ENCODE measurements at regions of chr9 and their contacts with region 1.

Region 1: DNA sequence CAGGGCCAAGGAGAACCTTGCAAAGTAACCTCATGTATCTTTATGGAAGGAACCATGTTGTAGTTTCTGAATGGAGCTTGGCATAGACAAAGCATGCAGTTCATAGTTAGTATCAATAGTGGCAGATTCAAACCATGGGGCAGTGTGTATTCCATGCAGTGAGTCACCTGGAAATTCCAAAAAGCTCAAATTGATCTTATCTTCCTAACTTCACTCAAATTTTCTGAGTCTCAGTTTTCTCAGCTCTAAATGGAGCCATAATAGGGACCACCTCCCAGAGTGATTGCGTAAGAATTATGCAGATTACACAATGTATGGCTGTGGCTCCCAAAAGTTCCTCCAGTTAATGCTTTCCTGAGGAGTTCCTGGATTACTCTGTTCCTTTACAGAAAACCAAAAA is 549.9 kb upstream of the KLF4 start:
- DNase-seq: no peak
- ATAC-seq: no peak
- H3K4me3 ChIP-seq: no peak overlapping the region
- H3K27ac ChIP-seq: no peak overlapping the region
- H3K4me1 ChIP-seq: no peaks in the 10 kb centered on the region
- H3K27me3 ChIP-seq: no peaks in the 10 kb centered on the region
- CTCF ChIP-seq: no peak

Region 2: DNA sequence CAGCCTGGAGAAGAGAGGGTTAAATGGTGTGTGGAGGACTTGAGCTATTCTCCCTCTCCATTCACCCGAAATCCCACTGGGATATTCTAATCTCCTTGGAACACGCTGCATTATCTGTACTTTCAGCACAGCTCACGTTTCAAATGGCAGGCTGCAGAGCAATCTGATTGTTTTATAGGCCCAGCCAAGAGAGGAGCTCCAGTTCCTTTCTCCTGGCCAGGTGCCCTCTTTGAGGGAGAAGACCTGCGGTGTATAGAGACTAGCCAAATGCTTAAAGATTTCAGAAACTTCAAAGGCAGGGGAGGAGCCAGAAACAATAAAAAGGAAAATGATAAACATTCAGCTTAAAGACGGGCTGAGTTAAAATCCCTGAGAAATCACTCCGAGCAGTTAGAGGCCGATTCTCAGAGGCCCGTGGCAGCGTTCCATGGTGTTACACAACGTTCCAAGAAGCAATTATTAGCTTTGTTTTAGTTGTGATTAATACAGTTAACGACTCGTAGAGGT is 14.1 kb after region 1 on chr9:
- intact Hi-C with region 1: loop called in 1 of 2 experiments (anchors 2 kb)
- DNase-seq: peak; percentile 72 to 78
- ATAC-seq: peak; percentile 59 to 83 (median 66)
- H3K4me3 ChIP-seq: peak overlapping the region; percentile 43
- H3K27ac ChIP-seq: peak overlapping the region; percentile 48
- H3K4me1 ChIP-seq: peaks cover 42% of the 10 kb centered on the region
- H3K27me3 ChIP-seq: no peaks in the 10 kb centered on the region
- CTCF ChIP-seq: no peak

Region 3: DNA sequence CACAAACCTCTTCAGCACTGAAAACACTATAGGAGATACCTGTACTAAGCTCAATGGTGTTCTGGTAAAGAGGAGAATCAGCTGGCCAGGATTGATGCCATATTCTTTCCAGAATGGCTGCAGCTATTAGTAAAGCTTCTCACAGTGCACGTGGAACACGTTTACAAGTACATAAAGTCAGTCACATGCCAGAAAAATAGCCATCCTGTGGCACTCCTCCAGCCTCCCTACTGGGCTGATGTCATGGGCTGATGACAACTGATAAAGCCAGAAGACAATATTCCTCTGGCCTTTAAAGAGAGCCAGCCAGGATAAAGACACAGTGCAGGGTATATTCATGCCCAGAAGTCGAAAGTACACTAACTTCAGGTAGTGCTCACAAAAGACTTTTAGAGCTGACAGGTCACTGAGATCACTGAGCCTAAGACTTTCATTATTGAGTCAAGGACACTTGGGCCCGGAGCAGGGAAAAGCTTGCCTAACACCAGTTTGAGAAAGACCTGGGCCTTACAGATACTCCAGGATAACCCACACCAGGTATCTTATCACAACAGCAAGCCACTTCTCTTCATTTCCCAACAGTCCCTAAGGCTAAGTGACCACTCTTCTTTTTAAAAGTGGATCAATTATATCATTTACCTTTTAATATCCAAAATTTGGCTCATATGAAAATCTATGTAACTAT is 924.1 kb after region 1 on chr9:
- intact Hi-C with region 1: no loop called
- DNase-seq: no peak
- ATAC-seq: no peak
- H3K4me3 ChIP-seq: no peak overlapping the region
- H3K27ac ChIP-seq: no peak overlapping the region
- H3K4me1 ChIP-seq: no peaks in the 10 kb centered on the region
- H3K27me3 ChIP-seq: no peaks in the 10 kb centered on the region
- CTCF ChIP-seq: no peak

Measured in psoas muscle (tissue), 8 donors.